Left ventricle myocardium inferior (tissue), 1 donor: ENCODE measurements at regions of chr3 and their contacts with region 1.

Region 1: GRCh38 chr3:188937389-188937788 is 234.4 kb upstream of the TPRG1 start:
- DNase-seq: no peak
- H3K4me3 ChIP-seq: no peak overlapping the region
- H3K27ac ChIP-seq: no peak overlapping the region
- H3K4me1 ChIP-seq: peaks cover 19% of the 10 kb centered on the region
- H3K27me3 ChIP-seq: no peaks in the 10 kb centered on the region
- CTCF ChIP-seq: no peak

Region 2: DNA sequence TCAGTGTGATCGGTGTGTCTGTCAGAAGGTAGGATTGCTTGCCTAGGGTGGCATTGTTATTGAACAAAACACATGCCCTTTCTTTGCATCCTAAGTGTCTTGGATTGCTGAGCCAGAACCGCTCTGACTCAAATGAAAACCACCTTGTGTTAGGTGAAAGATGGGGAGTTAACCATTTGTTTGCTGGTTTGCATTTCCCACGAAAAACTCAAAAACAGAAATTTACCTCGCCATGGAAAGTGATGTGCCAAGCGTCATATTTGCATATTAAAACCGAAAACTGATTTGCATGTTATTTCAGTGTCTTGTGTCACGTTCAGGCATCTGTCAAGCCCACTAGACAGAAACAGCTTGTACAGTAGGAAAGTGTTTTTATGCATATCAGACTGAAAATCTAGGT is 240.3 kb before region 1 on chr3:
- intact Hi-C with region 1: loop called (anchors 10 kb)
- DNase-seq: no peak
- H3K4me3 ChIP-seq: no peak overlapping the region
- H3K27ac ChIP-seq: no peak overlapping the region
- H3K4me1 ChIP-seq: no peaks in the 10 kb centered on the region
- H3K27me3 ChIP-seq: no peaks in the 10 kb centered on the region
- CTCF ChIP-seq: no peak

Region 3: GRCh38 chr3:189419038-189419437 is 481.6 kb after region 1 on chr3:
- intact Hi-C with region 1: no loop called
- DNase-seq: no peak
- H3K4me3 ChIP-seq: no peak overlapping the region
- H3K27ac ChIP-seq: no peak overlapping the region
- H3K4me1 ChIP-seq: no peaks in the 10 kb centered on the region
- H3K27me3 ChIP-seq: no peaks in the 10 kb centered on the region
- CTCF ChIP-seq: no peak